Right cardiac atrium (tissue), 5 donors: ENCODE measurements at regions of chr2 and their contacts with region 1.

Region 1: GRCh38 chr2:54330162-54330925 is 74.3 kb upstream of the TSPYL6 start:
- DNase-seq: peak; percentile 98 to 99 (median 99)
- ATAC-seq: peak; percentile 97 to 99
- H3K4me3 ChIP-seq: peak overlapping the region; percentile 48
- H3K27ac ChIP-seq: peak overlapping the region; percentile 92
- H3K4me1 ChIP-seq: peaks cover 3% of the 10 kb centered on the region
- H3K27me3 ChIP-seq: no peaks in the 10 kb centered on the region

Region 2: GRCh38 chr2:54212456-54212855 is 117.9 kb before region 1 on chr2:
- intact Hi-C with region 1: loop called in 1 of 4 experiments (anchors 10 kb)
- DNase-seq: no peak
- ATAC-seq: peak; percentile 53 to 69
- H3K4me3 ChIP-seq: no peak overlapping the region
- H3K27ac ChIP-seq: no peak overlapping the region
- H3K4me1 ChIP-seq: peaks cover 2% of the 10 kb centered on the region
- H3K27me3 ChIP-seq: no peaks in the 10 kb centered on the region

Region 3: DNA sequence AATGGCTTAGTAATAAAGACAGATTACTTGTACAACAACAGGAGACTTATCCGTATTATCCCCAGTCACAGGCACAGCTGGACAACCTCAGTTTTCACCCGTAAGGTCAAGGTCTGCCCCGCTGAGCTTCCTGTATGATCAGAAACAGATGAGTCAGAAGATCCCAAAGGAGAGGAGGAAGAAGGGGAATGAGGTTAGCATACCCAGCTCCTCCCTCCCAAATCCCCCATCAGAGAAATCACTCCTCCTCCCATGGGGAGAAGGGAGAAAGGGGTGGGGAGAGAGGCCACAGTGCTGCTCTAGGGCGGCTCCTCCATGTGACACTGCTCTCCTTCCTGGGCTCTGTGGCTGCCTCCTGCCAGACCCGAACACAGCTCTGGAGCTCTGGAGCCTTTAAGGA is 72.0 kb after region 1 on chr2:
- intact Hi-C with region 1: no loop called
- DNase-seq: peak; percentile 66 to 82 (median 78)
- ATAC-seq: peak; percentile 88 to 93
- H3K4me3 ChIP-seq: no peak overlapping the region
- H3K27ac ChIP-seq: peak overlapping the region; percentile 73
- H3K4me1 ChIP-seq: no peaks in the 10 kb centered on the region
- H3K27me3 ChIP-seq: no peaks in the 10 kb centered on the region

Region 4: DNA sequence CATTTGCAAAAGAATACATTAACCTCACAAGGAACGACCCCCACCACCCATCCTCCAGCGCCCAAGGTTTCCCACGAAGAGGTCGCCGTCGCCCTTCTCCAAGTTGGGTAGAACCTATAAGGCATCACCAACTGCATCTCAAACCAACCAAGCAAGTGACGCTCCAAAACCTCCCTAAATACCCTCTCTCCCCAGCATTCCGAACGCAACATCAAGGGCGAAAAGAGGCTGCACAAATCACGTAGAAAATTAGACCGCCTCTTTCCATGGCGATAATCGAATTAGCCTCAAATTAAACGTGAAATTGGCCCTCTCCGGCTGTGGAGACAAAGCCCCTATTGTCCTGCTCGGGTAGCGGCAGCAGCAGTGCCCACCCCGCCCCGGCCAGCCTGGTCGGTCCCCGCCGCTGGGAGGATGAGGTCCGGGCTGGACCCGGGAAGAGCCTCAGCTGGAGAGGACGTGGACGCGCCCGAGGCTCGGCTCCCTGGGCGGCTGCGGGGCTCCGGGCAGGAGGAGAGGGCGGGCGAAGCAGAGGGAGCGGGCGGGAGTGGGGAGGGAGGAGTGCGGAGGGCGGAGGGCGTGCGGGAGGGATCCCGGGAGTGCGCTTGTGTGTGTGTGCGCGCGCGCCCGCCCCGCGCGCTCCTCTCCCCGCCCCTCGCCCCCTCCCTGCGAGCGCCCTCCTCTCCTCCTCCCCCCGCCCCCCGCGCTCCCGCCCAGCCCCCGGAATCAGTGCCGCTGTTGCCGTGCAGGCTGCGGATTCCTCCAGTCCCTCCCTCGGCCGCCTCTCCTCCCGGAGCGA is 125.4 kb after region 1 on chr2 and contains the start of gene SPTBN1:
- intact Hi-C with region 1: loop called in 1 of 4 experiments (anchors 10 kb)
- DNase-seq: peak; percentile 95 to 97 (median 97)
- ATAC-seq: peak; percentile 96 to 97
- H3K4me3 ChIP-seq: peak within 1 kb of the TSS; percentile 96
- H3K27ac ChIP-seq: peak within 1 kb of the TSS; percentile 89
- H3K4me1 ChIP-seq: no peaks in the 10 kb centered on the region
- H3K27me3 ChIP-seq: no peaks in the 10 kb centered on the region
- total RNA-seq, gene SPTBN1: 304 to 348 (median 336) TPM

Region 5: GRCh38 chr2:54680397-54681041 is 350.2 kb after region 1 on chr2:
- intact Hi-C with region 1: no loop called
- DNase-seq: no peak
- ATAC-seq: peak in 1 of 2 donors; percentile 44
- H3K4me3 ChIP-seq: no peak overlapping the region
- H3K27ac ChIP-seq: no peak overlapping the region
- H3K4me1 ChIP-seq: peaks cover 5% of the 10 kb centered on the region
- H3K27me3 ChIP-seq: no peaks in the 10 kb centered on the region